Activated CD4-positive, alpha-beta T cell treated with anti-CD3 and anti-CD28 coated beads for 36 hours (primary cell): ENCODE measurements at regions of chr5 and their contacts with region 1.

Region 1: GRCh38 chr5:26482810-26483375 is 555.5 kb downstream of the CDH9 start:
- DNase-seq: peak; percentile 16
- ATAC-seq: no peak
- H3K4me3 Mint-ChIP-seq: no peak overlapping the region
- H3K27ac Mint-ChIP-seq: no peak overlapping the region
- H3K4me1 Mint-ChIP-seq: no peaks in the 10 kb centered on the region
- H3K27me3 Mint-ChIP-seq: no peaks in the 10 kb centered on the region

Region 2: GRCh38 chr5:24633712-24634325 is 1849.1 kb before region 1 on chr5:
- CTCF ChIA-PET with region 1: no interaction called
- POLR2A ChIA-PET with region 1: no interaction called
- intact Hi-C with region 1: loop called in 1 of 2 experiments (anchors 10 kb)
- DNase-seq: no peak
- ATAC-seq: no peak
- H3K4me3 Mint-ChIP-seq: no peak overlapping the region
- H3K27ac Mint-ChIP-seq: no peak overlapping the region
- H3K4me1 Mint-ChIP-seq: no peaks in the 10 kb centered on the region
- H3K27me3 Mint-ChIP-seq: no peaks in the 10 kb centered on the region